ENCODE measurements at regions of chr6 and their contacts with region 1.

Region 1: GRCh38 chr6:7086488-7086887 is 21.3 kb upstream of the RREB1 start:
- DNase-seq: peak; percentile 56
- ATAC-seq: peak; percentile 59
- H3K4me3 Mint-ChIP-seq: peak overlapping the region; percentile 53
- H3K27ac Mint-ChIP-seq: peak overlapping the region; percentile 26
- H3K4me1 Mint-ChIP-seq: peaks cover 30% of the 10 kb centered on the region
- H3K27me3 Mint-ChIP-seq: peaks cover 6% of the 10 kb centered on the region

Region 2: DNA sequence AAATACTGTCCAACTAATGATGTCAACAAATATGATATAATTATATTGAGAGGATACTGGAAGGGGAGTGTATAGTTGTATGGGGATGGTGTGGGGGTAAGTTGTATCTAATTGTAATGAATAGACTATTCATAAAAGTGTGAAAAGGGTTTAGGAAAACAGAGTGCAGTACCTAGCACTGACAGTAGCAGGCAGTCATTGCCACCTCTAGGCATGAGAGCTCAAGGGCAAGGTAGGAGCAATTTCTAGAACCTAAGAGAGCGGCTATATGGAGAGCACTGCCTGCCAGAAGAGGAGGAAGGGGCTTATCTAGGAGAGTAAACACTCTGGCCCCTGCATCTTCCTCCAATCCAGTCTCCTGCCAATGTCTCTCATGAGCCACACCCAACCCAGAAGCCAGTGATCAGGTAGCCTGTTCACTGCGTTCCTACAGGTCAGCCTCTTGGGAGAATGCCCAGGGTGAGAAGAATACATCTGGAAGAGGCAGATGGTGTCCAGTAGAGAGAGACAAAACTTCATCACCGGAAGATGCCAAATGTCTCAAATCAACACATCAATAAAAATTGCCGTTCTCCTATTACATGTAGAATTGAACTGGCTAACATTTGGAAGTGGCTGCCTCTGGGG is 298.0 kb before region 1 on chr6:
- CTCF ChIA-PET with region 1: no interaction called
- POLR2A ChIA-PET with region 1: no interaction called
- intact Hi-C with region 1: loop called in 1 of 2 experiments (anchors 5 kb)
- DNase-seq: peak; percentile 53
- ATAC-seq: peak; percentile 89
- H3K4me3 Mint-ChIP-seq: no peak overlapping the region
- H3K27ac Mint-ChIP-seq: no peak overlapping the region
- H3K4me1 Mint-ChIP-seq: peaks cover under 1% of the 10 kb centered on the region
- H3K27me3 Mint-ChIP-seq: no peaks in the 10 kb centered on the region

Region 3: GRCh38 chr6:7051233-7052114 is 35.0 kb before region 1 on chr6:
- CTCF ChIA-PET with region 1: interaction called, 3 read pairs
- POLR2A ChIA-PET with region 1: no interaction called
- intact Hi-C with region 1: loop called in 1 of 2 experiments (anchors 2 kb)
- DNase-seq: peak; percentile 60
- ATAC-seq: peak; percentile 65
- H3K4me3 Mint-ChIP-seq: no peak overlapping the region
- H3K27ac Mint-ChIP-seq: no peak overlapping the region
- H3K4me1 Mint-ChIP-seq: peaks cover 6% of the 10 kb centered on the region
- H3K27me3 Mint-ChIP-seq: peaks cover 16% of the 10 kb centered on the region

Region 4: DNA sequence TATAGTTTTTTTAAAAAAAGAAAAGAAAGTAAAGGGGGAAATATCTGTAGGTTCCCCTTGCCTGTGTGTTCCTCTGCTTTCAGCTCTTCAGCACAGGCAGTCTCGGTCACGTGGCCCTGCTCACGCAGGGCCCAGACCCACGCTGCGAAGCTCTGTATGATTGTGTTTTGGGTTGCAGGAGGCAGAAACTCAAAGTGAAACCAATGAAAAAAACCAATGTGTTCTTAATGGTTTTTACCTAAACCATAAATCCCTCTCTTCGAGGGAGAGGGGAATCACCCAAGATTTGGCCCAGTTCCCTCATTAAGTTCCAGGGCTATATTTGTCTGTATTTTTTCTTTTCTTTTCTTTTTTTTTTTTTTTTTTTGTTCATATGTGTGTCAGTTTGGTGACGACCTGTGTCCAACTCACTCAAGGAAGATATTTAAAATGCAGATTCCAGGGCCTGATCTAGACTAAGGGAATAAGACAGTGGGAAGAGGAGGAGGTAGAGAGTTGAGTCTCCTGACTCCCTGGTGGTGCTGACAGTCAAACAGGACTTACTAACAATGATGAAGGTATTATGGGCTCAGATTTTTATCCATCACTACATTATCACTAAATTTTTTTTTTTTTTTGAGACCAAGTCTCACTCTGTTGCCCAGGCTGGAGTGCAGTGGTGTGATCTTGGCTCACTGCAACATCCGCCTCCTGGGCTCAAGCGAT is 12.5 kb before region 1 on chr6:
- CTCF ChIA-PET with region 1: interaction called, 9 read pairs
- POLR2A ChIA-PET with region 1: interaction called, 3 read pairs
- intact Hi-C with region 1: loop called (anchors 1 kb)
- DNase-seq: peak; percentile 87
- ATAC-seq: peak; percentile 99
- H3K4me3 Mint-ChIP-seq: no peak overlapping the region
- H3K27ac Mint-ChIP-seq: no peak overlapping the region
- H3K4me1 Mint-ChIP-seq: peaks cover 12% of the 10 kb centered on the region
- H3K27me3 Mint-ChIP-seq: peaks cover 26% of the 10 kb centered on the region

Region 5: GRCh38 chr6:7140631-7141378 is 54.3 kb after region 1 on chr6:
- CTCF ChIA-PET with region 1: interaction called, 3 read pairs
- POLR2A ChIA-PET with region 1: interaction called, 10 read pairs
- intact Hi-C with region 1: loop called in 1 of 2 experiments (anchors 2 kb)
- DNase-seq: peak; percentile 91
- ATAC-seq: peak; percentile 72
- H3K4me3 Mint-ChIP-seq: peak overlapping the region; percentile 72
- H3K27ac Mint-ChIP-seq: peak overlapping the region; percentile 85
- H3K4me1 Mint-ChIP-seq: peaks cover 82% of the 10 kb centered on the region
- H3K27me3 Mint-ChIP-seq: no peaks in the 10 kb centered on the region

Region 6: DNA sequence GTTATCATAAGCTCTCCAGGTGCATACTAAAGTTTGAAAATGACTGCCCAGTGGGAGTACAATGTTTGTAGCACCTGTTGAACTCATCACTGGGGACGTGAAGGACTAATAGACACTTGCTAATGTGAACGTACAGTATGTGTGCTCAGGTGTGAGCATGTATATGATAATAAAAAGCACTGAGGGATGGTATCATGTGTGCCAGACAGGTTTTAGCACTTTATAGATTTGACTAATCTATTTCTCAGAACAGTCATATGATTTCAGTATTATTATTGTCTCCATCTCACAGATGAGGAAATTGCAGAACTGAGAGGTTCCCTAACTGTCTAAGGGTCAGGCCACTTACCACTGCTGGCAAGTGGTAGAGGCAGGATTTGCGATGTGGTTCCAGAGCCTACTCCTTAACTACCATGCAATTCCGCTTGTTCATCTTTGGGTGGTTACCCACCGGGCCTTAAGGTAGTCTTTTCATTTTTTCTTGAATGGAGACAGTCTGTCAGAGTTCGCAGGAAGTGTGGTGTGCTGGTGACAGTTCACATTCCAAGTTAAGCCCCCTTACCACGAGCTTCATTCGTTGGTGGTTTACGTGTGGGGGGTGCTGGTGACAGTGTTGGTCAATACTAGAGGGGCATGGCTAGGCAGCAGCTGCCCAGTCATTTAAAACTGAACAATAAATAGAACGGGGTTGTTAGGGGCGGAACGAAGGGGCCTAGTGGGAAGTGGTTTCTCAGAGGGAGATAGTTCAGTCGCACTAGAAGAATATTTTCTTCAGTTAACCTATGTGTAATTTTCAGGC is 68.1 kb after region 1 on chr6:
- CTCF ChIA-PET with region 1: no interaction called
- POLR2A ChIA-PET with region 1: interaction called, 8 read pairs
- intact Hi-C with region 1: loop called in 1 of 2 experiments (anchors 2 kb)
- DNase-seq: peak; percentile 41
- ATAC-seq: peak; percentile 78
- H3K4me3 Mint-ChIP-seq: no peak overlapping the region
- H3K27ac Mint-ChIP-seq: peak overlapping the region; percentile 59
- H3K4me1 Mint-ChIP-seq: peaks cover 83% of the 10 kb centered on the region
- H3K27me3 Mint-ChIP-seq: no peaks in the 10 kb centered on the region

Region 7: DNA sequence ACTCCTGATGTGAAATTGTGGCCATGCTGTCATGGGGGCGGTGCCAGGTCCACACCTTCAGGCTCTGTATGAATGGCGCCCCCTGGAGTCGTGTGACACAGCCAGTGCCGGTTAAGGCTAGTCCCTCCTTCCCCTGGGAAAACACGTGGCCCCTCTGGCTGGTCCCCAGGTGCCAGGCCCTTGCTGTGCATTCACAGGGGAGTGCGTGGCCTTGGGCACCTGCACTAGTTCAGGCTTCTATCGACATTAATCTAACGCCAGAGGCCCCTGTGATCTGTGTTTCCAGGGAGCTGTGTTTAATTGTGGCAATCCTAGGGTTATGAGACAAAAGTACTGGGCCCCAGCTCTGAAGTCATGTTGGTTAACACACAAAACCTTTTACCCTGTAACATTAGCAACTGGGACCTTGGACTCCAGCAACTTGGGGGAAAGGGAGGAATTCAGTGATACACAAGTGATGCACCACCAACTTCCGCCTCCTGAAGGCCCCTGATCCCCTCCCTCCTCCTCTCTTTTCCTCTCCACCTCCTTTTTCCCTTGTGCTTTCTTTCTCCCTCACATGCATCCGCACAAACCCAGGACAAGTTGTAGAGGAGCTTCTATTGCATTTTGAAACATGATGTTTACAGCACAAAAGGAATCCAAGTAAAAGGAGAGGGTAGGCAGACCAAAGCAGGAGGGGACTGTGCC is 152.6 kb after region 1 on chr6:
- CTCF ChIA-PET with region 1: interaction called, 4 read pairs
- POLR2A ChIA-PET with region 1: no interaction called
- intact Hi-C with region 1: loop called in 1 of 2 experiments (anchors 5 kb)
- DNase-seq: peak; percentile 92
- ATAC-seq: peak; percentile 92
- H3K4me3 Mint-ChIP-seq: no peak overlapping the region
- H3K27ac Mint-ChIP-seq: no peak overlapping the region
- H3K4me1 Mint-ChIP-seq: peaks cover 23% of the 10 kb centered on the region
- H3K27me3 Mint-ChIP-seq: no peaks in the 10 kb centered on the region